ENCODE measurements at regions of chr15 and their contacts with region 1.

Region 1: GRCh38 chr15:85587707-85588401 is 206.9 kb downstream of the KLHL25 start:
- DNase-seq: peak in 1 of 14 experiments; percentile 33
- ATAC-seq: no peak
- H3K4me3 ChIP-seq: no peak overlapping the region
- H3K4me3 Mint-ChIP-seq: no peak overlapping the region
- H3K27ac ChIP-seq: no peak overlapping the region
- H3K27ac Mint-ChIP-seq: no peak overlapping the region
- H3K4me1 ChIP-seq: peaks cover 23% of the 10 kb centered on the region
- H3K4me1 Mint-ChIP-seq: peaks cover 66% of the 10 kb centered on the region
- H3K27me3 ChIP-seq: no peaks in the 10 kb centered on the region
- H3K27me3 Mint-ChIP-seq: no peaks in the 10 kb centered on the region
- CTCF ChIP-seq: no peak

Region 2: GRCh38 chr15:85504749-85505676 is 82.8 kb before region 1 on chr15:
- CTCF ChIA-PET with region 1: no interaction called
- POLR2A ChIA-PET with region 1: no interaction called
- intact Hi-C with region 1: no loop called
- DNase-seq: peak in 11 of 14 experiments; percentile 6 to 73 (median 21)
- ATAC-seq: no peak
- H3K4me3 ChIP-seq: no peak overlapping the region
- H3K4me3 Mint-ChIP-seq: no peak overlapping the region
- H3K27ac ChIP-seq: no peak overlapping the region
- H3K27ac Mint-ChIP-seq: no peak overlapping the region
- H3K4me1 ChIP-seq: peaks cover 16% of the 10 kb centered on the region
- H3K4me1 Mint-ChIP-seq: peaks cover 77% of the 10 kb centered on the region
- H3K27me3 ChIP-seq: no peaks in the 10 kb centered on the region
- H3K27me3 Mint-ChIP-seq: no peaks in the 10 kb centered on the region
- CTCF ChIP-seq: peak; percentile 75

Region 3: GRCh38 chr15:85652457-85652856 is 64.6 kb after region 1 on chr15:
- CTCF ChIA-PET with region 1: no interaction called
- POLR2A ChIA-PET with region 1: interaction called, 19 read pairs
- intact Hi-C with region 1: loop called in 1 of 2 experiments (anchors 5 kb)
- DNase-seq: no peak
- ATAC-seq: no peak
- H3K4me3 ChIP-seq: no peak overlapping the region
- H3K4me3 Mint-ChIP-seq: no peak overlapping the region
- H3K27ac ChIP-seq: no peak overlapping the region
- H3K27ac Mint-ChIP-seq: peak overlapping the region; percentile 36
- H3K4me1 ChIP-seq: peaks cover 13% of the 10 kb centered on the region
- H3K4me1 Mint-ChIP-seq: peaks cover 19% of the 10 kb centered on the region
- H3K27me3 ChIP-seq: no peaks in the 10 kb centered on the region
- H3K27me3 Mint-ChIP-seq: no peaks in the 10 kb centered on the region
- CTCF ChIP-seq: no peak